ENCODE measurements at regions of chr17 and their contacts with region 1.

Region 1: DNA sequence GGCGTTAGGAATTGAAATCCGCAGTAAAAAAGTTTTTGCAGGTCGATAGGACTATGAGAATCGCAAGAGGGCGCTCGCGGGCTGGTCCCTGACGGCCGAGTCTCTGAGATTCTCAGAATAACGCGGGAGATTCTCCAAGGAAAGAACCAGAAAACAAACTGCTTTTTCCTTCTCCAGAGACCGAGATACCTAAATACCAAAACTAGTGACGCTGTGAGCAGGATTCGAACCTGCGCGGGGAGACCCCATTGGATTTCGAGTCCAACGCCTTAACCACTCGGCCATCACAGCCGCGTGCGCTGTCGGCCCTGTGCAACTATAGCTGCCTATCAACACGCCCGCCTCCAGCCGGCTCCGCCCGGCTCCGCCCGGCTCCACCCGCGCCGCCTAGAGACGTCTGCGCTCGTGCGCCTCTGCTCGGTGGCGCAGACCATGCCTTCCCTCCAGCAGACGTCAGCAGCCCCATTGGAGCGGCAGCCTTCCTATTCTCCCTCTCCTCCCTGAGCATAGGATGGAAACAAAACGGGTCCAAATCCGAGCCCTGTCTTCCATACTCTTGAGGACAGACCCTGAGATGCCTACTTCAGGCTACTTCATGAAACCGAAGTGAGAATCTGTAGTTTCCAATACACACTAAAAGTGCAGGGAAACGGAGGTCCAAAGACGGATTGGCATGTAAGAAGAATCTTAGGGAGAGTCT is 13.4 kb downstream of the PER1 start:
- DNase-seq: peak; percentile 96
- ATAC-seq: peak; percentile 93
- H3K4me3 ChIP-seq: peak overlapping the region; percentile 71 to 86 (median 79)
- H3K27ac ChIP-seq: peak overlapping the region; percentile 74
- H3K4me1 ChIP-seq: peaks cover 36% of the 10 kb centered on the region
- H3K27me3 ChIP-seq: no peaks in the 10 kb centered on the region; a peak in 1 of 5 replicates
- CTCF ChIP-seq: peak; percentile 70
- EP300 ChIP-seq: peak in 1 of 2 experiments; percentile 51; a peak in 2 of 4 replicates
- POLR2A ChIP-seq: no peak
- RAD21 ChIP-seq: peak; percentile 84

Region 2: GRCh38 chr17:8125157-8125946 is 13.5 kb before region 1 on chr17:
- CTCF ChIA-PET with region 1: no interaction called
- POLR2A ChIA-PET with region 1: interaction called, 5 read pairs
- in situ Hi-C with region 1: no loop called
- intact Hi-C with region 1: loop called (anchors 2 kb)
- DNase-seq: peak; percentile 64
- ATAC-seq: peak; percentile 6; the same call in 2 of the 3 replicates
- H3K4me3 ChIP-seq: peak overlapping the region; percentile 58 to 95 (median 68)
- H3K27ac ChIP-seq: no peak overlapping the region
- H3K4me1 ChIP-seq: peaks cover 49% of the 10 kb centered on the region
- H3K27me3 ChIP-seq: peaks cover 5 to 43% of the 10 kb centered on the region in 2 experiments
- CTCF ChIP-seq: no peak
- EP300 ChIP-seq: no peak
- POLR2A ChIP-seq: no peak
- RAD21 ChIP-seq: no peak

Region 3: GRCh38 chr17:8156246-8156992 is 17.6 kb after region 1 on chr17:
- CTCF ChIA-PET with region 1: interaction called, 28 read pairs
- POLR2A ChIA-PET with region 1: interaction called, 18 read pairs
- in situ Hi-C with region 1: no loop called
- intact Hi-C with region 1: loop called (anchors 1 kb)
- DNase-seq: peak; percentile 98
- ATAC-seq: peak; percentile 62
- H3K4me3 ChIP-seq: peak overlapping the region; percentile 58 to 70 (median 63); a peak in 5 of 6 replicates
- H3K27ac ChIP-seq: peak overlapping the region; percentile 86
- H3K4me1 ChIP-seq: peaks cover 71% of the 10 kb centered on the region
- H3K27me3 ChIP-seq: no peaks in the 10 kb centered on the region
- CTCF ChIP-seq: peak; percentile 25
- EP300 ChIP-seq: peak in 1 of 2 experiments; percentile 66; a peak in 2 of 4 replicates
- POLR2A ChIP-seq: peak; percentile 63 to 70
- RAD21 ChIP-seq: no peak